ENCODE measurements at regions of chr1 and their contacts with region 1.

Region 1: GRCh38 chr1:15364740-15365139 is 44.9 kb upstream of the EFHD2 start:
- DNase-seq: peak in 2 of 3 donors; percentile 18 to 24
- H3K4me3 ChIP-seq: no peak overlapping the region
- H3K4me3 Mint-ChIP-seq: no peak overlapping the region
- H3K27ac ChIP-seq: no peak overlapping the region
- H3K27ac Mint-ChIP-seq: no peak overlapping the region
- H3K4me1 ChIP-seq: no peaks in the 10 kb centered on the region
- H3K4me1 Mint-ChIP-seq: peaks cover 7% of the 10 kb centered on the region
- H3K27me3 ChIP-seq: no peaks in the 10 kb centered on the region
- H3K27me3 Mint-ChIP-seq: peaks cover 2 to 8% (median 3%) of the 10 kb centered on the region in 3 donors
- CTCF ChIP-seq: peak; percentile 39

Region 2: GRCh38 chr1:15328351-15329103 is 36.2 kb before region 1 on chr1:
- intact Hi-C with region 1: loop called in 1 of 2 experiments (anchors 5 kb)
- DNase-seq: no peak
- H3K4me3 ChIP-seq: no peak overlapping the region
- H3K4me3 Mint-ChIP-seq: peak overlapping the region in 1 of 2 donors; percentile 59
- H3K27ac ChIP-seq: no peak overlapping the region
- H3K27ac Mint-ChIP-seq: peak overlapping the region in 1 of 7 donors; percentile 10
- H3K4me1 ChIP-seq: peaks cover 16 to 19% of the 10 kb centered on the region in 2 donors
- H3K4me1 Mint-ChIP-seq: peaks cover 27% of the 10 kb centered on the region
- H3K27me3 ChIP-seq: no peaks in the 10 kb centered on the region
- H3K27me3 Mint-ChIP-seq: peaks cover 9 to 21% (median 20%) of the 10 kb centered on the region in 3 donors
- CTCF ChIP-seq: no peak

Measured in CD14-positive monocyte (primary cell).